ENCODE measurements at regions of chr3 and their contacts with region 1.

Region 1: GRCh38 chr3:100068826-100069225 is 45.5 kb downstream of the FILIP1L start:
- DNase-seq: peak; percentile 86
- ATAC-seq: peak; percentile 86
- H3K4me3 Mint-ChIP-seq: no peak overlapping the region
- H3K27ac Mint-ChIP-seq: no peak overlapping the region
- H3K4me1 Mint-ChIP-seq: peaks cover 36% of the 10 kb centered on the region
- H3K27me3 Mint-ChIP-seq: no peaks in the 10 kb centered on the region
- CTCF ChIP-seq: peak; percentile 44; the same call in 1 of the 2 replicates

Region 2: DNA sequence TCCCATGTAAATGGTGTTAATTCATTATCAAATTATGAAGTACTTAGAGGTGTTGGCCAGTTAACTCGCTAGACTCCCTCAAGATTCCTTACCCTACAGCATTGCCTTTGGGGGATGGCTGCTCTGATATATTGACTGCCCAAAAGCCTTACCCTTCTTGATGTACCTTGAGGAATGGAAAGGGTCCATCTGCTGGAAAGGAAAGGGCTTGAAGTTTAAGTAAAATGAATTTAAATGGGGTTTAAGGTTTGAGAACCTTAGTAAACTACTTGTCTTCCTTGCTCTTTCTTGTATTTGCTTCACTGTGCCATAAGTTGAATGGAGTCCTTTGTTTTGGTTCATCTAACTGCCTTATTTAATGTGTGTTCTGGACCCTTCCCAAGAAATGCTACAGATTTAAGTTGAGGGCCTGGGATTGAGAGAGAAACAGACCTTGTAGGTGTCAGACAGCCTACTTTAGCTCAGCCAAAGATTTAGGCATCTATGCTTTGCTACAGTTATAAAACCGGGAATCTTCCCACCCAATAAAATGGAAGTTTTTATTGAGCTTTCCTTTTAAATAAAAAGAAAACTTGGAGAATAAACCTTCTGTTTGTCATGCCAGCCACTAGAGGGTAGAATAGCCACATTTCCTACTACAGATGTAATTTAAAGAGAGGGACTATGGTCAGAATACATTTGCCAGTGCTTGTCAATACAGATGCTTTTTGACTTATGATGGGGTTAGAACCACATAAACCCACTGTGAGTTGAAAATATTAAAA is 225.8 kb before region 1 on chr3:
- CTCF ChIA-PET with region 1: interaction called, 10 read pairs
- POLR2A ChIA-PET with region 1: no interaction called
- DNase-seq: no peak
- ATAC-seq: peak; percentile 79
- H3K4me3 Mint-ChIP-seq: no peak overlapping the region
- H3K27ac Mint-ChIP-seq: no peak overlapping the region
- H3K4me1 Mint-ChIP-seq: peaks cover 31% of the 10 kb centered on the region
- H3K27me3 Mint-ChIP-seq: no peaks in the 10 kb centered on the region
- CTCF ChIP-seq: 0 out of 2 replicates have a peak, but pooled peaks have one; percentile 36

Region 3: DNA sequence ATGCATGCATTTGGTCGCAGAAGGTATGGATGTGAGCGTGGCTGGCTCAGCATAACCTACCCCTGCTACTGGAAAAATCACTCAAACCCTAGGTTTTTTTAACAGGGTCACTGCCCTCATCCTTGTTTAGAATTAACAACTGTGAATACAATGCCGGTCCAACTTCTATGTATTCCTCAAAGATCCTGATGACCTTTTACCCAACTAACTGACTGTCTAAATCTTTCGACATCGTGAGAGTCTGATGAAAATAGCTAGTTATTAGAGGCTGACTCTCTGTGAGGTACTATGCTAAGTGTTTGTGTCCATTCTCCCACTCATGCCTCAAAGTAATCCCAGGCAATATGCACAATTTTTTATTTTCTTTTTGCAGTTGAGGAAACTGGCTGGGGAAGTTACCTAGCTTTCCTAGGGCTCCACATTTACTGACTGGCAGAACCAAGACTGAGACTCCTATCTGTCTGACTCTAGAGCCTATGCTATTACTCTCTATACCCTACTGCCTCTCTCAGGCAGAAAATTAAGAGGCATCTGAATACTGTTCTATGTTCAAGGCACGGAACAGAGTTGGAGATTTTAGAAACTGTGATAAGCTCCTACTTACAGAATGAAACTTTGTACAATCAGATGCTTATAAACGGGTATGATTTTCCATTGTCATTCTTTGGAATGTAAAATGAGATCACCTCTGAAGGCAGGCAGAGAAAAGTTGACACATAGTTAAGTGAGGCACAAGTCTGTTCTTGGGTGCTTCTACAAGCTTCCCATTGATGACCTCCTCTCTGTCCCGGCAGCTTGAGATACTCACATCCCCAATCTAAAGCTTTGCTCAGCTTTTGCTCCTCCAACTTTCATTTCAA is 10.9 kb before region 1 on chr3:
- CTCF ChIA-PET with region 1: interaction called, 20 read pairs
- POLR2A ChIA-PET with region 1: no interaction called
- DNase-seq: no peak
- ATAC-seq: no peak
- H3K4me3 Mint-ChIP-seq: no peak overlapping the region
- H3K27ac Mint-ChIP-seq: no peak overlapping the region
- H3K4me1 Mint-ChIP-seq: peaks cover 10% of the 10 kb centered on the region
- H3K27me3 Mint-ChIP-seq: no peaks in the 10 kb centered on the region; the same call in 1 of the 2 replicates
- CTCF ChIP-seq: no peak

Region 4: GRCh38 chr3:100089812-100090668 is 21.2 kb after region 1 on chr3:
- CTCF ChIA-PET with region 1: interaction called, 14 read pairs
- POLR2A ChIA-PET with region 1: no interaction called
- DNase-seq: peak; percentile 43
- ATAC-seq: peak; percentile 95
- H3K4me3 Mint-ChIP-seq: no peak overlapping the region
- H3K27ac Mint-ChIP-seq: peak overlapping the region; percentile 36
- H3K4me1 Mint-ChIP-seq: peaks cover 45% of the 10 kb centered on the region
- H3K27me3 Mint-ChIP-seq: no peaks in the 10 kb centered on the region
- CTCF ChIP-seq: no peak; the same call in 1 of the 2 replicates

Region 5: GRCh38 chr3:100260685-100261484 is 192.1 kb after region 1 on chr3 and contains the start of gene TBC1D23:
- CTCF ChIA-PET with region 1: interaction called, 10 read pairs
- POLR2A ChIA-PET with region 1: interaction called, 5 read pairs
- DNase-seq: peak; percentile 98
- ATAC-seq: peak; percentile 99
- H3K4me3 Mint-ChIP-seq: peak within 1 kb of the TSS; percentile 95
- H3K27ac Mint-ChIP-seq: peak within 1 kb of the TSS; percentile 99
- H3K4me1 Mint-ChIP-seq: peaks cover 38% of the 10 kb centered on the region
- H3K27me3 Mint-ChIP-seq: no peaks in the 10 kb centered on the region
- CTCF ChIP-seq: no peak
- total RNA-seq, gene TBC1D23: 45.0 to 73.6 TPM (median 46.3 TPM) in 3 replicates

Measured in WTC11 (cell line).